Posterior vena cava (tissue), 2 donors: ENCODE measurements at regions of chr1 and their contacts with region 1.

Region 1: DNA sequence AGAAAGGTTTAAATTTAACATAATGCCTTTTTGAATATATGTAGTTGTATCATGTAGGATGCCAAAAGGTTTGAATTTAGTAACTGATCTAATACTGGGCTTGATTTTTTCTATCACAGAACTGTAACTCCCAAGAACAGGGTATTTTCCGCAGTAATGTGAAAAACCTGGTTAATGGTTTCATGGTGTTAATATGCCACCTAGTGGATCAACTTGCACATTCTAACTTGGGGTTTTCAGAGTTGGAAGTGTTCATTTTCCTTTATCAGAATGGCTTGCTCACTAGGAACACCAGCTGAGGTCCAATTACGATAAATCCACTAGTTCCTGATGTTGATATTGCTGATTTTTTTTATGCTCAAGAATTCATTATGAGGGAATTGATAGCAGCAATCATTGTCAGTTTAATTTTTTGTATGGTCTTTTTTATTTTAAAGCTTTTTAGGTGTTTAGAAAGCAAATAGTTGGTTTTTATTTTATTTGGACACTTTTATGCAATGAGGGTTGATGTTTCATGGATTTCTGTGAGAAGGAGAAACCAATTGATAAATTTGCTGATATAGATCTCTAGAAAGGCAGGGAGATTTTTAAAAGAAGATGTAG is 157.2 kb downstream of the PLA2G4A start:
- DNase-seq: no peak

Region 2: GRCh38 chr1:186404454-186405051 is 581.4 kb before region 1 on chr1:
- intact Hi-C with region 1: loop called in 1 of 2 experiments (anchors 10 kb)
- DNase-seq: no peak

Region 3: GRCh38 chr1:186605762-186606350 is 380.1 kb before region 1 on chr1:
- intact Hi-C with region 1: loop called (anchors 5 kb)
- DNase-seq: no peak

Region 4: DNA sequence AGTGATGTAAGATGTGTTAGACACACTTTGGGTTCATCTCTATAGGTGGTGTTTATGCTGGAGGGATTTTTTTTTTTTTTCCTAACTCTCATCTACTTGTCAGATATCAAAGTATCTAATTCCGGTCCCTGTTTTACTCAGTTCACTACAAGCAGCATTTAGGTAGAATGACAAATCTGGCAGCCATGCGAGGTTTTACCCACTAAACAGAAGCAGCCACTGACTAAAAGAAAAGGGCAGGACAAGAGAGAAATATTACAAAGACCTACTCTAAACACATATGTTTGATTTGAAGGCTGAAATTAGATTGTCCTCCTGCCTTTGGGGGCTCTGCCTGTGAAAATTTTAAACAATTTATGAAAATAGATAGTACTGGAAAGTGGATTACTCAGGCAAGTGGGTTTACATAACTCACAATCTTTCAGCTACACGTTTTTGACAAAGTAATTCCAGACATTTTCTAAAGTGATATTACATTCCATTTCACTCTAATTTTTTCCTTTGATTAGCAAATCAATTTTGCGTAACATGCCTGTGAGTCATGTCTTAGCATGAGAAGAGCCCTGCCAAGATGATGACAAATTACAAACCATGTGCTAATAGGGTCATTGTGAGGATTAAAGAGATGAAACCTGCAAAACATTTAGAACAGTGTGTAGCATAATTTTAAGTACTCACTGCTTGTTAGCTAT is 15.4 kb after region 1 on chr1:
- intact Hi-C with region 1: no loop called
- DNase-seq: no peak